ENCODE measurements at regions of chr14 and their contacts with region 1.

Region 1: GRCh38 chr14:85415015-85415712 is 114.8 kb upstream of the FLRT2 start:
- DNase-seq: peak; percentile 99
- H3K4me3 ChIP-seq: peak overlapping the region; percentile 25 to 40 (median 37)
- H3K27ac ChIP-seq: peak overlapping the region; percentile 98
- H3K4me1 ChIP-seq: peaks cover 43% of the 10 kb centered on the region
- H3K27me3 ChIP-seq: no peaks in the 10 kb centered on the region
- CTCF ChIP-seq: peak; percentile 67 to 76

Region 2: GRCh38 chr14:85195872-85196477 is 219.2 kb before region 1 on chr14:
- CTCF ChIA-PET with region 1: no interaction called
- dilution Hi-C with region 1: no loop called
- in situ Hi-C with region 1: no loop called
- intact Hi-C with region 1: loop called (anchors 1 kb)
- DNase-seq: no peak
- H3K4me3 ChIP-seq: no peak overlapping the region
- H3K27ac ChIP-seq: no peak overlapping the region
- H3K4me1 ChIP-seq: no peaks in the 10 kb centered on the region
- H3K27me3 ChIP-seq: no peaks in the 10 kb centered on the region
- CTCF ChIP-seq: peak; percentile 59 to 65

Region 3: GRCh38 chr14:85241022-85241855 is 173.9 kb before region 1 on chr14:
- CTCF ChIA-PET with region 1: no interaction called
- dilution Hi-C with region 1: no loop called
- in situ Hi-C with region 1: loop called in 1 of 2 experiments (anchors 25 kb)
- intact Hi-C with region 1: no loop called
- DNase-seq: no peak
- H3K4me3 ChIP-seq: no peak overlapping the region
- H3K27ac ChIP-seq: no peak overlapping the region
- H3K4me1 ChIP-seq: peaks cover 5% of the 10 kb centered on the region
- H3K27me3 ChIP-seq: no peaks in the 10 kb centered on the region
- CTCF ChIP-seq: no peak

Region 4: GRCh38 chr14:85380881-85381280 is 34.3 kb before region 1 on chr14:
- CTCF ChIA-PET with region 1: no interaction called
- dilution Hi-C with region 1: no loop called
- in situ Hi-C with region 1: no loop called
- intact Hi-C with region 1: no loop called
- DNase-seq: no peak
- H3K4me3 ChIP-seq: no peak overlapping the region
- H3K27ac ChIP-seq: no peak overlapping the region
- H3K4me1 ChIP-seq: no peaks in the 10 kb centered on the region
- H3K27me3 ChIP-seq: no peaks in the 10 kb centered on the region
- CTCF ChIP-seq: no peak

Region 5: GRCh38 chr14:85471727-85472126 is 56.6 kb after region 1 on chr14:
- CTCF ChIA-PET with region 1: no interaction called
- dilution Hi-C with region 1: no loop called
- in situ Hi-C with region 1: no loop called
- intact Hi-C with region 1: loop called (anchors 2 kb)
- DNase-seq: peak; percentile 76
- H3K4me3 ChIP-seq: no peak overlapping the region
- H3K27ac ChIP-seq: no peak overlapping the region
- H3K4me1 ChIP-seq: peaks cover 21% of the 10 kb centered on the region
- H3K27me3 ChIP-seq: no peaks in the 10 kb centered on the region
- CTCF ChIP-seq: no peak

Region 6: DNA sequence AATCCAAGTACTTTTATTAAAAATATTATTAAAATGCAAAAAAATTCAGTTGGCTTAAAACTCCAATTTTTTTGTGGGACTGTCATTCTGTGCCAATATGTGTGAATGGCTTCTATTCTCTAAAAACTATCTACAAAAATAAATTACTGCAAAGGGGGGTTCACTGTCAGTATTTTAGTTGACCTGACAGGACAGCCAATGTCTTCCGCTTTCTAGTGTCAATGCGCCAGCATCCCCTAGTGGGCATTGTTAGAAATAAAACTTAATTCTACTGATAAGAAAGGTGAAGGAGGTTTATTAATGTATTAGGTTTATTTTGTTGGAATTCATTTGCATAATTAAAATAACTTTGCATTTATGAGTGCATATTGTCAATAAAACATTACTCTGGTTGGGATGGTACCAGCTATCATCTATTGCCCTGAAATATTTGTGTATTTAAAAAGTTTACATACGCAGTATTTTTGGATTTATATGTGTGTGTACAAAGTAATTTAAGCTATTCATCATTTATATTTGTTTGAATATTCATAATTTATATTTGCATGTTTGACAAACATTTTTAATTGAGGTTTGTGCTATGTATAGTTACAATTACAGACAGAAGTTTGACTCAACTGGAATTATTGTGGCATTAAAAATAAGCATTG is 642.0 kb after region 1 on chr14:
- CTCF ChIA-PET with region 1: no interaction called
- dilution Hi-C with region 1: no loop called
- in situ Hi-C with region 1: no loop called
- intact Hi-C with region 1: loop called (anchors 5 kb)
- DNase-seq: no peak
- H3K4me3 ChIP-seq: no peak overlapping the region
- H3K27ac ChIP-seq: no peak overlapping the region
- H3K4me1 ChIP-seq: no peaks in the 10 kb centered on the region
- H3K27me3 ChIP-seq: no peaks in the 10 kb centered on the region
- CTCF ChIP-seq: peak; percentile 85 to 87

Region 7: DNA sequence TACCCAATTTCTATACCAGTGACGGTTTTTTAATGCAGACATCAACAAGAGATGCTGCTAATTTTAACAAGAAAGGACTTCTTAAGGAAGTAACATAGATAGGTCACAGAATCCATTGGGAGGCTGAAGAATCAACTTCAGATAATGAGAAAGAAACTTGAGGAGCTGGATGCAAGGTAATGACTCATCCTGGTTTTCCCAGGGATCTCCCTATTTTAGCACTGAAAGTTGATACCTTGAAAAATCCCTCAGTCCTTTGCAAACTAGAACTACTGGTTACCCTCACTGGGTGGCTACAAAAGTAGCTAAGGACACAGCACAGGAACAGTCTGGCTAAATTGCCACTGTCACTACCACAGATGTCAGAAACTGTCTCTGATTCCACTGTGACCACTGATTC is 676.6 kb after region 1 on chr14:
- CTCF ChIA-PET with region 1: no interaction called
- dilution Hi-C with region 1: no loop called
- in situ Hi-C with region 1: no loop called
- intact Hi-C with region 1: no loop called
- DNase-seq: peak; percentile 1
- H3K4me3 ChIP-seq: no peak overlapping the region
- H3K27ac ChIP-seq: no peak overlapping the region
- H3K4me1 ChIP-seq: no peaks in the 10 kb centered on the region
- H3K27me3 ChIP-seq: no peaks in the 10 kb centered on the region
- CTCF ChIP-seq: no peak

Measured in mammary epithelial cell (primary cell).